ENCODE measurements at regions of chr13 and their contacts with region 1.

Region 1: GRCh38 chr13:39159393-39159792 is 121.1 kb downstream of the NHLRC3 start:
- DNase-seq: no peak

Region 2: GRCh38 chr13:39201180-39201579 is 41.8 kb after region 1 on chr13:
- intact Hi-C with region 1: loop called in 1 of 2 experiments (anchors 2 kb)
- DNase-seq: no peak

Region 3: GRCh38 chr13:39451860-39452301 is 292.5 kb after region 1 on chr13:
- intact Hi-C with region 1: no loop called
- DNase-seq: no peak